ENCODE measurements at regions of chr15 and their contacts with region 1.

Region 1: DNA sequence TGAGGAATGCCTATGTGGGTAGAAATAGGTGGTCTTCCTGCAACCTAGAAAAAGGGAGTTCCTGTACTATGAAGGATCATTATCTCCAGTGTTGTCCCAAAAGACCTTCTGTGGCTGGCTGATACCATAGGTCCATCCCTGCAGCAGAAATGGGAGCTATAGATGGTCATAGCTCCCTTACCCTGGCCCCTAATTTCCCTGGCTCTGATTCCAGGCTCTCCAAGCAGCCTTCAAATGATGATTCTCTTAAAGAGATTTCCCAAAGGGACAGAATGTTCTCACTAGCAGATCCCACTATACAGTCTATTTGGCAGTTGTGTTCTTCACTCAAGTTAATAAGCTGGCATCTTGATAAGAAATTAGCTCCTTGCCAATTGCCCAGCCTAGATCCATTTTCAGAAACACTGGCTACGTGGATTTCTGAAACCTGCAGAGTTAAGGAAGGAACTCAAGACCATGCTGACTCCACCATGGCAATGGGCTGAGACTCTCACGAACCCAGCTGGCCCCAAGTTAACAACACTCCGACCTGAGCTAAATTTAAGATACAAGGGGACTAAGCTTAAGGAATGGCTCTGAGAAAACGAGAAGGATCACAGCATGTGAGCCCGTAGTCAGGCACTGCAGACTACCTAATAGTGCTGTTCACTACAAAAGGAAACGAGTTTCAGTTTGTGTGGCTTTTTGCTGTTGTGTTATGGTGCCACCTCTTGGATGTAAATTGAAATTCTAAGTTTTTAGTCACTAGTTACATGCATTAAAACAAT is 11.4 kb downstream of the C15orf40 start:
- DNase-seq: peak; percentile 49
- ATAC-seq: peak; percentile 91
- H3K4me3 Mint-ChIP-seq: peak overlapping the region; percentile 63
- H3K27ac Mint-ChIP-seq: peak overlapping the region; percentile 68
- H3K4me1 Mint-ChIP-seq: peaks cover 8% of the 10 kb centered on the region
- H3K27me3 Mint-ChIP-seq: no peaks in the 10 kb centered on the region

Region 2: DNA sequence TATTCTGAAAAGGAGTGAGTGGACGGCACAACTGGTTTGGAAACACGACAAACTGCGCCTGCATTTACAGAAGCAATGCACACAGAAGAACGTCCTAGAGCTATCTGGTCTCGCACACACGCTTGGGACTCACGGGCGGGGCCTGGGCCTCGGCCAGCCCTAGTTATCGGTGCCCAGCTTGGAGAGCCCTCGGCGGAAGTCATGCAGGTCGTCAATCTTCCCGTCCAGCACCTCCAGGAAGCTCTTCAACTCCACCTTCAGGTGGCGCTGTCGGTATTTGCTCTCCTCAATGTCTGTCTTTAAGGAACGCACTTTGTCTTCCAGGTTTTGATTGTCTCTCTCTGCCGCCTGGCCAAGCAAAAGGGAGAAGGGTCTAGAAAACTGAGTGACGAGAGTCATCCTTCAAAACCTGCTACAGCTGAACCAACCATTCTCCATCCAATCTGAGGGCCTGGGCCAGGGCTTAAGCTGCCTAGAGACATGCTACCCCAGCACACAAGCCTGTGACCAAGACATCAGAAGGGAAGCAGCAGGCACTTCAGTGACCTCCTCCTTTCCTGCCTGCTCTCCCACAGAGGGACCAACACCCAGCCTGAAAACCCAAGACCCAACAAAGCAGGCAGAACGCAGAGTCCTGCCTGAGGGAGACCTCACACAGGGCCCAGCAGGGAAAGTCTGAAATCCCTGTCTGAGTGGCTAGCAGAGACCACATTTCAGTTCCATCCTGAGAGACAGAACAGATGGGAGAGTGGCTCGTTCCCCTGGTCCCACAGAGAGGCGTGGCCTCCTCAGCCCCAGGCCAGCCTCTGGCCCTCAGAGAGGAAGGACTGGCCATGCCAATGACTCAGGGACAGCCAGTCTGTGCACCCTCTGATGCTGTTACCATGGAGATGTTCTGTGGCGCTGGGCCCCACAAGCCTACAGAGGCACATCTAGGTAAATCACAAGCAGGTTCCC is 150.3 kb before region 1 on chr15:
- CTCF ChIA-PET with region 1: interaction called, 33 read pairs
- DNase-seq: peak; percentile 68
- ATAC-seq: peak; percentile 68
- H3K4me3 Mint-ChIP-seq: no peak overlapping the region
- H3K27ac Mint-ChIP-seq: no peak overlapping the region
- H3K4me1 Mint-ChIP-seq: peaks cover 10% of the 10 kb centered on the region
- H3K27me3 Mint-ChIP-seq: peaks cover 17% of the 10 kb centered on the region

Region 3: GRCh38 chr15:82875411-82876003 is 124.6 kb before region 1 on chr15:
- CTCF ChIA-PET with region 1: no interaction called
- DNase-seq: no peak
- ATAC-seq: no peak
- H3K4me3 Mint-ChIP-seq: no peak overlapping the region
- H3K27ac Mint-ChIP-seq: no peak overlapping the region
- H3K4me1 Mint-ChIP-seq: no peaks in the 10 kb centered on the region
- H3K27me3 Mint-ChIP-seq: peaks cover 5% of the 10 kb centered on the region

Region 4: DNA sequence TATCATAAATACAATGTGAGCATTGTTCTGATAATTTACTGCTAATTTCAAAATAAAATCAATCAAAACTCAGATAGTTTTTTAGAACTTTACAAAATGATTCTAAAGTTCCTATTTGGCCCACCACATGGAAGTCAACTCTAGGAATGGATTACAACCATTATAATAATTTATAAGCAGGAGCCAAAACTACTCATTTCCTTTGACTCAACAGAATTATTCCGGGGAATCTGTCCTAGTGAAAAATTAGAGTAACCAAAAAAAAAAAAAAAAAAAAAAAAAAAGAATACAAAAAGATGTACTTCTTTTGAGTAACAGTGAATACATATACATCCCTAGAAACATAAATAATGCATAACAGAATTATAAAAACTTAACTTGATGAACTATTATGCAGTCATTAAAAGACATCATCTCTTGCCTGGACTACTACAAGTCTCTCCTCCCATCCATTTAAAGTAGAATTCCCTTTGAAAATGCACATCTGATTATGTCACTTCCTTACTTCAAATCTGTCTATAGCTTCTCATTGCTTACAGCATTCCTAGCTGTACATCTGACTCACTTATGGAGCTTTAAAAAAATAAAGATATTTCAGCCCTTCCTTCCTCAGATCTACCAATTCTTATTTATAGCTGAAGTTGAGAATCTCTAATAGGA is 164.2 kb after region 1 on chr15:
- CTCF ChIA-PET with region 1: no interaction called
- DNase-seq: no peak
- ATAC-seq: no peak
- H3K4me3 Mint-ChIP-seq: peak overlapping the region; percentile 49
- H3K27ac Mint-ChIP-seq: peak overlapping the region; percentile 86
- H3K4me1 Mint-ChIP-seq: peaks cover 35% of the 10 kb centered on the region
- H3K27me3 Mint-ChIP-seq: peaks cover 51% of the 10 kb centered on the region